ENCODE measurements at regions of chr5 and their contacts with region 1.

Region 1: GRCh38 chr5:115841382-115842088 is at the starts of genes AP3S1 and ATG12:
- DNase-seq: peak; percentile 94
- H3K4me3 ChIP-seq: peak within 1 kb of the TSS; percentile 81 to 98 (median 88)
- H3K27ac ChIP-seq: peak within 1 kb of the TSS; percentile 91
- H3K4me1 ChIP-seq: peaks cover 14% of the 10 kb centered on the region
- H3K27me3 ChIP-seq: no peaks in the 10 kb centered on the region
- CTCF ChIP-seq: no peak
- total RNA-seq, gene AP3S1: 117 to 125 TPM
- total RNA-seq, gene ATG12: 33.4 to 48.5 TPM

Region 2: DNA sequence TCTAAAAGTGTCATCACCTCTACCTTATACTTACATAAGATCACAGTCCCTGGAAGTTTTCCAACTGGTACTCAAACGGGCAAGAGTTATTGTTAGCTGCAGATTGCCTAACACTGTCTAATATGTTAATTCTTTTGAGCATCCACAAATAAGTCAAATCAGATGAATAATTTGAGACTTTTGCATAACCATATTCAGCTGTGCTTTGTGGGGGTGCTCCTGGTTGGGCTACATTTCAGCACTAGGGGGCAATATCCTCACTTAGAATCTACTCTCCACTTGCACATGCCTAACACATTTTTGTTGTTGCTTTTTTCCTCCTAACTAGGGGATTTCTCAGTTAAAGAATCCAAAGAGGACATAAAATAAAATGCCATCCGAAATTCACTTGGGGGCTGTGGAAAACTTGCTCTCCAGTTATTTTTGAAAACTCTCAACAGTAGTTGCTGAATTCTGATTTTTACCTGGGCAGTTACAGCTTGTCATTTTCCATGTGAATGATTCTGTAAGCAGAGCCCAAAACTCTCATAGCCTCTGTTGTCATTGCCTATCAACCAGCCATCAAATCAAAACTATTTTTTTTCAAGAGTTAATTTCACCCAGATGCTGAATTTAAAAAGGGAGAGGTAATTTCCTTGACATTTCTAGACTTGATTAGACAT is 743.4 kb before region 1 on chr5:
- CTCF ChIA-PET with region 1: no interaction called
- dilution Hi-C with region 1: no loop called
- in situ Hi-C with region 1: no loop called
- intact Hi-C with region 1: loop called (anchors 10 kb)
- DNase-seq: peak; percentile 45
- H3K4me3 ChIP-seq: no peak overlapping the region
- H3K27ac ChIP-seq: no peak overlapping the region
- H3K4me1 ChIP-seq: peaks cover 3% of the 10 kb centered on the region
- H3K27me3 ChIP-seq: no peaks in the 10 kb centered on the region
- CTCF ChIP-seq: peak; percentile 78 to 80

Region 3: DNA sequence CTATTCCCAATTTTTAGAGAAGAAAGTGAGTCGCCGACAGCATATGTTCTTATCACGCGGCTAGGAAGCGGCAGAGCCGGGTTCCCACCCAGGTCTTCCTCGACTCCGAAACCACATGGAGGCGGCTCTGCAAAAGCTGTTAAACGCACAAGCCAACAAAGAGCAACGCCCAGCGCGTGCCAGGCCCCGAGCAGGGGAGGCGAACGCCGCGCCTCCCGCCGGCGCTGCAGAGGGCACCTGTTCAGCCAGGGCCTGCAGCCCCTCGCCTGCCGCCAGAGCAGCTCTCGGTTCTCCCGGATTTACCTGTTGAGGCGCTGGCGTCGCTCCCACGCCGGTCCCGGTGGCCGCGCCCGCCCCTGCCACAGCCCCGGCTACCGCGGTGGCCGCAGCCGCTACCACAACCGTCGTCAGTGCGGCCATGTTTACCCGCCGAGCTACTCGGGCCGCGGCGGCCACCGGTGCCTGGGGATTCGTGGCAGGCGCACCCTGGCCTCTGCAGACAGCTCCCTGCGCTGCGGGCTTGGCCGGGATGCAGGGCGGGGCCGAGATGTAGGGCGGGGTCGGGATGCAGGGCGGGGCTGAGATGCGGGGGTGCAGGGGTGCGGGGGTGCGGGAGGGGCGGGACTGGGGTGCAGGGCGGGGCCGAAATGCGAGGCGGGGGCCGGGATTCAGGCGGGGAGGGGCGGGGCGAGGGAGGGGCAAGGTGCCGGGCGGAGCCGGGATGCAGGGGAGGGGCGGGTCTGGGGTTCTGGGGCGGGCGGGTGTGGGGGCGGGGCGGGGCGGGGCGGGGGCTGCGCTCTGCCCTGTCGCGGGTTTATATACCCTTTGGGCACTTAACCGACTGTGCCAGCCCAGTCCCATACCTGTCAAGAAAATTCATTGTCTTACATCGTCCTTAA is 545.2 kb before region 1 on chr5 and contains the start of gene CCDC112:
- CTCF ChIA-PET with region 1: no interaction called
- dilution Hi-C with region 1: no loop called
- in situ Hi-C with region 1: loop called in 1 of 2 experiments (anchors 25 kb)
- intact Hi-C with region 1: no loop called
- DNase-seq: peak; percentile 73
- H3K4me3 ChIP-seq: peak within 1 kb of the TSS; percentile 57 to 98 (median 81)
- H3K27ac ChIP-seq: peak within 1 kb of the TSS; percentile 40
- H3K4me1 ChIP-seq: peaks cover 5% of the 10 kb centered on the region
- H3K27me3 ChIP-seq: no peaks in the 10 kb centered on the region
- CTCF ChIP-seq: no peak
- total RNA-seq, gene CCDC112: 3.9 to 4.3 TPM

Region 4: DNA sequence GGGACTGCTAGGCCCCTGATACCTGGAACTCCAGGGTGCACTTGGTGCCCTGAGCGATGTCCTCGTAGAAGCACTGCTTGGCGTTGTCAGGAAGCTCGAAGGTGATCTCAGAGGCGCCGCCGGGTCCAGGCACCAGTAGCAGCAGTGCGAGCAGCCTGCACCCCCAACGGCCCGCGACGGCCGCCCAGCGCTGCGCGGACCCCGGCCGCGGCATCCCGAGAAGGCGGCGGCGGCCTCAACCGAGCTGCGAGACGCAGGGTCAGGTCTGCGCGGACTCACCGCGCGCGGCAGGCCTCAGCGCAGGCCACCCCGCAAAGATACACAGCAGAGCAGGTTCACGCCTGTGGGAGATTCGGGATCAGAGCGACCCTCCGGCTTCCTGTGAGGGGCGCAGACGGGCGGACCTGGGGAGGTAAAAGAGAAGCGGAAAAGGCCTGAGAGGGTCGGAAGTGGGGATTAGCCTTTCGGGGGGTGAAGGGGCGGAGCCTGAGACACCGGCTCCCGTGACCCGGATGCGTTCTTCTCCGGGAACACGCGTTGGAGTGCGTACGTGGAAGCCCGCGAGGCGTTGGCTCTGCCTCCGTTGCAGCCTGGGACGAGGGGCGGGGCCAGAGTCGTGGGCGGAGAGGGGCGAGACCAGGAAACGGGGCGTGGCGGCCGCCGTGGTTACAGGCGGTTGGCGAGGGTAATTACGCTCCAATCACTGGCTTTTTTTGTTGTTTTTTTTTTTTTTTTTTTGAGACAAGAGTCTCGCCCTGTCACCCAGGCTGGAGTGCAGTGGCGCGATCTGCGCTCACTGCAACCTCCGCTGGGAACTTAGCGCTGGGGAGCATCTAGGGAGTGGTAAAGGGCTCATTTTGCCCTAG is 215.7 kb before region 1 on chr5 and contains the start of gene TMED7:
- CTCF ChIA-PET with region 1: no interaction called
- dilution Hi-C with region 1: no loop called
- in situ Hi-C with region 1: loop called (anchors 10 kb)
- intact Hi-C with region 1: no loop called
- DNase-seq: peak; percentile 98
- H3K4me3 ChIP-seq: peak within 1 kb of the TSS; percentile 83 to 97 (median 96)
- H3K27ac ChIP-seq: peak within 1 kb of the TSS; percentile 80
- H3K4me1 ChIP-seq: peaks cover 13% of the 10 kb centered on the region
- H3K27me3 ChIP-seq: no peaks in the 10 kb centered on the region
- CTCF ChIP-seq: no peak
- total RNA-seq, gene TMED7: 95.6 to 132 TPM

Region 5: GRCh38 chr5:115634343-115635132 is 207.0 kb before region 1 on chr5:
- CTCF ChIA-PET with region 1: no interaction called
- dilution Hi-C with region 1: no loop called
- in situ Hi-C with region 1: loop called (anchors 10 kb)
- intact Hi-C with region 1: loop called (anchors 1 kb)
- DNase-seq: peak; percentile 68
- H3K4me3 ChIP-seq: peak overlapping the region; percentile 10 to 48 (median 21)
- H3K27ac ChIP-seq: peak overlapping the region; percentile 24
- H3K4me1 ChIP-seq: peaks cover 9% of the 10 kb centered on the region
- H3K27me3 ChIP-seq: no peaks in the 10 kb centered on the region
- CTCF ChIP-seq: peak; percentile 92 to 97

Region 6: GRCh38 chr5:115940126-115940810 is 98.7 kb after region 1 on chr5:
- CTCF ChIA-PET with region 1: interaction called, 23 read pairs
- dilution Hi-C with region 1: no loop called
- in situ Hi-C with region 1: no loop called
- intact Hi-C with region 1: no loop called
- DNase-seq: no peak
- H3K4me3 ChIP-seq: no peak overlapping the region
- H3K27ac ChIP-seq: no peak overlapping the region
- H3K4me1 ChIP-seq: no peaks in the 10 kb centered on the region
- H3K27me3 ChIP-seq: no peaks in the 10 kb centered on the region
- CTCF ChIP-seq: no peak

Region 7: DNA sequence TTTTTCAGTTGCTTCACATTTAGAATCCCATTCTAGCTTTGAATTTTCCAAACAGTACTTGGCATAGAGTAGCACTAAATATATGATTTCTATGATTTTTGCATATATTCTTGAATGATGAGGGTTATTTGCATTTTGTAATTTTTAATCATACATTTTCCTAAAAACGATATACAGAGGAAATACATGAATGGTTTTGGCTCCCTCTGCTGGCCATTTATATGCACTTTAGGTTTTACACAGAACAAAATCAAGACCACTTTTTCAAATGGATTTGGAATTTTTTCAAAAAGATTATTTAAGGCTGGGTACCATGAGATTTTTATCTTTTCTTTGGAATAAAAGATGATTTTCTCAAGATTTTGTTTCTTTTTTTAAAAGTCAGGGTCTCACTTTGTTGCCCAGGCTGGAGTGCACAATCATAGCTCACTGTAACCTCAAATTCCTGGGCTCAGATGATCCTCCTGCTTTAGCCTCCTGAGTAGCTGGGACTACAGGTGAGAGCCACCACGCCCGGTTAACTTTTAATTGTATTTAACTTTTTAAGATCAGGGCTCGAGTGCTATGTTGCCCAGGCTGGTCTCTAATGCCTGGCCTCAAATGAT is 226.6 kb after region 1 on chr5:
- CTCF ChIA-PET with region 1: no interaction called
- dilution Hi-C with region 1: no loop called
- in situ Hi-C with region 1: no loop called
- intact Hi-C with region 1: loop called (anchors 1 kb)
- DNase-seq: peak; percentile 14
- H3K4me3 ChIP-seq: no peak overlapping the region
- H3K27ac ChIP-seq: no peak overlapping the region
- H3K4me1 ChIP-seq: no peaks in the 10 kb centered on the region
- H3K27me3 ChIP-seq: peaks cover 3% of the 10 kb centered on the region
- CTCF ChIP-seq: peak; percentile 71 to 77

Measured in mammary epithelial cell (primary cell).